Colonic mucosa (tissue), 4 donors: ENCODE measurements at regions of chr10 and their contacts with region 1.

Region 1: DNA sequence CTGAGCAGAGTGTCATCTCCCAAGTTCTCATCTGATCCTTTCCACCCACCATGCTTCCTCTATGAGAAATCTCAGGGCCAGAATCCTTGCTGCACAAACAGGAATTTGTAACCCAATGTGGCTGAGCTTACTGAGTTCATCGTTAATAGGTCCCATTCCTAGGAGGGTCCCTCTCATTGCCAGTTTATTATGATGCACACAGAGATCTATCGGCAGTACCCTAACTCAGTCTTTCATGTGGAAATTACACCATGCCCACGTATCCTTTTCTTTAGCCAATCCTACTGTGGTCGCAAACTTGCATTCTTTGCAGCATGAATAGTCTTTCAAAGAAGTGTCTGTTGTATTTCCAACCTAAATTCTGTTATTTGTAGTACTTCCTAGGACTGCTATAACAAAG is 12.1 kb downstream of the TMEM236 start:
- DNase-seq: no peak
- H3K4me3 ChIP-seq: no peak overlapping the region
- H3K27ac ChIP-seq: no peak overlapping the region
- H3K4me1 ChIP-seq: no peaks in the 10 kb centered on the region
- H3K27me3 ChIP-seq: no peaks in the 10 kb centered on the region
- CTCF ChIP-seq: no peak

Region 2: GRCh38 chr10:17586821-17587234 is 177.3 kb before region 1 on chr10:
- intact Hi-C with region 1: no loop called
- DNase-seq: no peak
- H3K4me3 ChIP-seq: no peak overlapping the region
- H3K27ac ChIP-seq: no peak overlapping the region
- H3K4me1 ChIP-seq: no peaks in the 10 kb centered on the region
- H3K27me3 ChIP-seq: no peaks in the 10 kb centered on the region
- CTCF ChIP-seq: no peak

Region 3: DNA sequence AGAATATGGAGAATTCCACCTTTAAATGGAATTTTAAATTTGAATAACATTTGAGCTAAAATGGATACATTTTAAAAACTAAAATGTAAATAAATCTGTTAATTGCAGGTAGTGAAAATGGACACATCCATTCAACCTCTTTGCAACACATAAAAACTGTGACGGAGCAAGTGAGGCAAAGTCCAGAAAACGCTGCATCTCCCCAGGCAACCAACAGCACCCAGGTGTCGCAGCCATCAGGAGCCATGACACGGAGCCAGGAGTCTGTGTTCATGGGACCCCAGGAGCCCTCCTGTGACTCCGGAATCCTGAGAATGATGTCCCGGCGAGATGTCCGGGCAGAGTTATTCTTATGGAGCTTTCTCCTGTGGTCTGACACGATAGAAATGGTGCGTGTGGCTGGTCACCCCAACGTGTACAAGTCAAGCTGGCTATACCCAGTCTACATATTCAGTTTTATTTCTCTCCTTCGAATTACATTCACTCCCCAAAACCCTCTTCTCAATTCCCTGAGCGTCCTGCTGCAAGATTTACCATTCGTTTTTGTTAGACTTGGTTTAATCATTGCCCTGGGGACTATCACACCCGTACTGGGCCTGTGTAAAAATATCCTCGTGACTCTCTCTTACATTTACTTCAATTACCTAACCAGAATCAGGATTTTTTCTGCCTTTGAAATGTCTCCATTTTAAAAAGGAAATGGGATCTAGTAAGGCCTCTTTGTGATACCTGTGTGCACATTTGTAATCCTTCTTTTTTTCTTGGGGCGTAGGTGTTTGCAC is 31.9 kb after region 1 on chr10:
- intact Hi-C with region 1: loop called (anchors 5 kb)
- DNase-seq: peak; percentile 41
- H3K4me3 ChIP-seq: no peak overlapping the region
- H3K27ac ChIP-seq: peak overlapping the region; percentile 28
- H3K4me1 ChIP-seq: no peaks in the 10 kb centered on the region
- H3K27me3 ChIP-seq: no peaks in the 10 kb centered on the region
- CTCF ChIP-seq: no peak

Region 4: DNA sequence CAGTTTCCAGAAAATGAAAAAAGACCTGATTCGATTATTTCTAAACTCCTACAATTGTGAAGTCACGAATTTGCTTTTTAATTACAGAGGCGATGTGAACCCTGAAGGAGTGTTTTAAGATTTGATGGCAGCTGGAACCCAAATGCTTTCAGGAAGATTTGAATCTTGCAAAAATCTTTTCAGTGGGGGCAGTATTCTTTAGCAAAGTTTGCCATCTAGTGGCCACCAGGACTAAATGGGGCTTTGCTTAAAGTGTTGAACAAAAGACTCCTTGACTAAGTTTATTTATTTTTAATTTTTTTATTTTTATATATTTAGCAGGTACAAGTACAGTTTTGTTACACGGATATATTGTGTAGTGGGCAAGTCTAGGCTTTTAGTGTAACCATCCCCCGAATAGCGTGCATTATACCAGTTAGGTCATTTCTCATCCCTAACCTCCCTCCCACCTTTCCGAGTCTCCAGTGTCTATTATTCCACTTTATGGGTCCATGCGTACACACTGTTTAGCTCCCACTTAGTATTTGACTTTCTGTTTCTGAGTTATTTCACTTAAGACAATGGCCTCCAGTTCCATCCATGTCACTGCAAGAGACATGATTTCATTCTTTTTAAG is 474.8 kb after region 1 on chr10:
- intact Hi-C with region 1: no loop called
- DNase-seq: no peak
- H3K4me3 ChIP-seq: no peak overlapping the region
- H3K27ac ChIP-seq: no peak overlapping the region
- H3K4me1 ChIP-seq: no peaks in the 10 kb centered on the region
- H3K27me3 ChIP-seq: no peaks in the 10 kb centered on the region
- CTCF ChIP-seq: peak; percentile 60